ENCODE measurements at regions of chr7 and their contacts with region 1.

Region 1: GRCh38 chr7:50092579-50093491 is at the start of gene ZPBP:
- DNase-seq: peak; percentile 35 to 47 (median 44)
- H3K4me3 ChIP-seq: peak within 1 kb of the TSS; percentile 40 to 68 (median 47)
- H3K4me3 Mint-ChIP-seq: peak within 1 kb of the TSS; percentile 81 to 91
- H3K27ac ChIP-seq: no peak within 1 kb of the TSS
- H3K27ac Mint-ChIP-seq: peak within 1 kb of the TSS in 1 of 7 donors; percentile 20
- H3K4me1 ChIP-seq: peaks cover 8 to 10% of the 10 kb centered on the region in 2 donors
- H3K4me1 Mint-ChIP-seq: peaks cover 10% of the 10 kb centered on the region
- H3K27me3 ChIP-seq: no peaks in the 10 kb centered on the region
- H3K27me3 Mint-ChIP-seq: peaks cover 0 to 10% (median 3%) of the 10 kb centered on the region in 3 donors
- CTCF ChIP-seq: peak; percentile 86
- polyA plus RNA-seq, gene ZPBP: not detected

Region 2: DNA sequence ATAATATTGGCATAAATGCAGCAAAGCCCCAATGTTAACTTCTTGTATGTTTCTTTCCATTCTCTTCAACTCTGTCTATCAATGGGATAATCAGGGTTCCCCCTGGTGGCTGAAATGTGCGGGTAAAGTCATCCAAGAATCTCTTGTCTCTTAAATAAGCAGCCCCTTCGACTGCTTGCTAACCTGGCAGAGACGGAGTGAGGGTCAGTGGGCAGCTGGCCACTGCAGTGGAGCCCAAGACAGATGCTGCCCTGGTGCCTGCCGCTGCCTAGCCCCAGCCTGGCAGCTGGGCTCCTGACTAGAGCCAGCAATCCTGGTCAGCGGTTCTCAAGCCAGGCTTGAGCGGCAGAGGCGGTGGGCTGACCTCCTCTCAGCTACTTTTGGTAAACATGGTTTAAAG is 974.9 kb after region 1 on chr7:
- intact Hi-C with region 1: loop called in 1 of 2 experiments (anchors 10 kb)
- DNase-seq: peak in 1 of 3 donors; percentile 8
- H3K4me3 ChIP-seq: no peak overlapping the region
- H3K4me3 Mint-ChIP-seq: no peak overlapping the region
- H3K27ac ChIP-seq: no peak overlapping the region
- H3K27ac Mint-ChIP-seq: peak overlapping the region in 1 of 7 donors; percentile 19
- H3K4me1 ChIP-seq: no peaks in the 10 kb centered on the region
- H3K4me1 Mint-ChIP-seq: no peaks in the 10 kb centered on the region
- H3K27me3 ChIP-seq: no peaks in the 10 kb centered on the region
- H3K27me3 Mint-ChIP-seq: peaks cover 0 to 3% (median 0%) of the 10 kb centered on the region in 3 donors
- CTCF ChIP-seq: peak; percentile 36

Region 3: GRCh38 chr7:51162724-51163329 is 1070.0 kb after region 1 on chr7:
- intact Hi-C with region 1: loop called (anchors 5 kb)
- DNase-seq: peak; percentile 12 to 46 (median 39)
- H3K4me3 ChIP-seq: no peak overlapping the region
- H3K4me3 Mint-ChIP-seq: no peak overlapping the region
- H3K27ac ChIP-seq: no peak overlapping the region
- H3K27ac Mint-ChIP-seq: no peak overlapping the region
- H3K4me1 ChIP-seq: peaks cover 0 to 5% of the 10 kb centered on the region in 2 donors
- H3K4me1 Mint-ChIP-seq: peaks cover 5% of the 10 kb centered on the region
- H3K27me3 ChIP-seq: peaks cover 0 to 4% of the 10 kb centered on the region in 2 donors
- H3K27me3 Mint-ChIP-seq: peaks cover 0 to 2% (median 2%) of the 10 kb centered on the region in 3 donors
- CTCF ChIP-seq: peak; percentile 90

Measured in CD14-positive monocyte (primary cell).